ENCODE measurements at regions of chr14 and their contacts with region 1.

Region 1: DNA sequence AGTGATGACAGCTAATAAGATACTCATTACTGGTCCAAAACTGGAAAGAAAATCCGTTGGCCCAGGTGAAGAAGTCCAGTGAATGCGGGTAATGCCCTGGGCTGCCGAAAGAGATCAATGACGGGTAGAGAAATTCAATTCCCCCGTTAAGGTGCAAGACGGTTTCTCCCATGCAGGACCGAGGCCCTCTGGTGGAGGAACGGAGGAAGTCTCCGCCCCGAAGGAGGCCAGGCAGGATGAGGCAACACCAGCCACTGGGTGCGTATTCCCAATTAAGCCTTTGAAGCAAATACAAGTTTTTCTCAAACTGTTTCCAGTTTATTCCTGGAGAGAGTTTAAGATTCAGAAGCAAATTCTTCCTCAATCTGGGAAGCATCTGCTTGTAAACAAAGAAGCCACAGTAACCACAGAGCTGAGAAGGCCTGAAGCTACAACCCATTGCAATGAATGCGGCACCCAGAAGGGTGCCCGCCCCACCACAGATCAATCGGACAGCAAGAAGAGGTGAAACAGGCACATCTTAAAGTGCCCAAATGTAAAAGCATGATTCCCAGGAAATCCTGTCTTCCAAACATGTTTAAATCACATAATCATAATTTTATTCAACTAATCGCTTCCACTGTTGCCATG is 118.5 kb downstream of the TTC7B start:
- DNase-seq: peak; percentile 84 to 91
- ATAC-seq: peak; percentile 73 to 80 (median 75)
- H3K4me3 ChIP-seq: peak overlapping the region; percentile 29
- H3K27ac ChIP-seq: peak overlapping the region; percentile 94
- H3K4me1 ChIP-seq: peaks cover 73% of the 10 kb centered on the region
- H3K27me3 ChIP-seq: no peaks in the 10 kb centered on the region
- CTCF ChIP-seq: peak; percentile 97

Region 2: DNA sequence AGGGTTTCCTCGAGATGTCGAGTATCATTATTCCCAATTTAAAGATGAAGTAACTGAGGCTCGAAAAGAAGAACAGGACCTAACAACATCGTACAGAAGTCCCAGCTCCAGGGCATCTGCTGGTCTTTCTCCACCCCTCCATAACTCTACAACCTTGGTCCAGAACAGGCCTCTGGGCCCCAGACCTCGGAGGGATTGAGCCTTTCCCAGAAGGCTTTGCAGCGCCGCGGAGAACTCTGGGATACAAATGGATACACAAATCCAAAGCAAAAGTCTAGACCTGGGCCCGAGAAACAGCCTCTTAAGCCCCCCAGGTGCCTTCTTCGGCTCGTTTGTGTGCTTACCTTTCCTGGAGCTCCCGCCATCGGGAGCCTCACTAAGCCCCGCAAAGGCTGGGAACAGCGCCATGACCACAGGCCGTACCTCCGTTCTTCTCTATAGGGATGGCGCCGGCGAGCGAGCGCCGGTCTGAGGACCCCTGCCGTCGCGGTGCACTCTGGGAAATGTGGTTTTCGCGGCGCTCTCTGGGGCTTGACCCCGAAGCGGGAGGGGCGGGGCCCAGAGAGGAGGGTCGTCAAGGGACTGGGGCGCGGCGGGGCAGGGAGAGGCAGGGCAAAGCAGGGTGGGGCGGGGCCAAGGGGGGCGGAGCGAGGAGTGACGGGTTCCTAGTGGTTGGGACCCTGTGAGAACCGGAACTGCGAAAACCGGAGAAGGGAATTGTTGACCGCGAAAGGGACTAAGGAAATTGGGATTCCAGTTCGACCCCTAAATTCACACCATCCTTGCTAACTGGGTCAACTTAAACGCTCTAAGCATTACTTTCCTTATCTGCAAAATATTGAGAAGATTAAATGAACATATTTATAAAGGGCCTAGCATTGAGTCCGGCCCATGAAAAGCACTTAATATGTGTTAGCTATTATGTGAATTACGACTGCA is 365.9 kb before region 1 on chr14 and contains the start of gene NRDE2:
- intact Hi-C with region 1: loop called in 1 of 2 experiments (anchors 2 kb)
- DNase-seq: peak; percentile 100
- ATAC-seq: peak; percentile 98 to 100 (median 100)
- H3K4me3 ChIP-seq: peak within 1 kb of the TSS; percentile 76
- H3K27ac ChIP-seq: peak within 1 kb of the TSS; percentile 88
- H3K4me1 ChIP-seq: peaks cover 12% of the 10 kb centered on the region
- H3K27me3 ChIP-seq: peaks cover 0 to 15% (median 0%) of the 10 kb centered on the region in 3 donors
- CTCF ChIP-seq: no peak
- total RNA-seq, gene NRDE2: 11.0 to 21.8 (median 12.8) TPM

Region 3: DNA sequence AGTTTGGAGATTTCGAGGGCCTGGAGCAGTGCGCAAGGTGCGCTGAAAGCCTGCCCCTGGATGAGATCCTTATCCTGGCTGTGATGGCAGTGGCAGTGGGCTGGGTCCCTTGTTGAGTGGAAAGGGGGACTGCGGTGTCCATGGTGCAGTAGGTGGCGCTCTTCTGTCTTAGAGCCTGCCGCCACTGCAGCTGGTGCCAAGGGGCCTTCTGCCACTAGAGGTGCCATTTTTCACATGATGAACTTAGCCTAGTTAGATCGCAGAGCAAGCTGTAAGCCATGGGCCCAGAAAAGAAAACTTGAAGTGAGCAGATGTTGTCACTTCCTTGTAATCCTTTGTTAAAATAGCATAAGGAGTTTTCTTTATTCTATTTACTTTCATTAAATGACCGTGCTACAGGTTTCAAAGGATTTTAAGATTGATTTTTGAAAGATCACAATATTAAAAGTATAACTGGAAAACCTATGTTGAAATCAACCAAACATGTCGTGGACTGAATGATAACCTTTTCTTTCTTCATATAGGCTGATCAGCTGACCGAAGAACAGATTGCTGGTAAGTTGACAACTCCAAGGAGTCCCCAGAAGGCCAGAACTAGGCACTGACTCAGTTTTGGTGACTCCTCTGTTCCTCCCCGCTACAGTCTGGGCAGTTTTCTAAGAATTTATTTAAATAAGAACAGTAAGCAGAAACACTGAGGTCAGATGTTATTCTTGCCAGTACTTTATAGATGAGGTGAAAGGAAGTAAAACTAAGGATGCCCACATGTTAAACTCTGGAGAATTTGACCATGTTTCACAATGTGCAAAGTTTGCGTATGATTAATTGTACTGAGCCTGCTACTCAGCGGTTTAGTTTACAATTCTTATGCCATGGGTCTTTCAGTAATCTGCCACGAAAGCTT is 297.9 kb before region 1 on chr14:
- intact Hi-C with region 1: loop called (anchors 1 to 2 kb)
- DNase-seq: peak; percentile 88 to 94
- ATAC-seq: peak; percentile 73 to 80 (median 76)
- H3K4me3 ChIP-seq: peak overlapping the region; percentile 87
- H3K27ac ChIP-seq: peak overlapping the region; percentile 92
- H3K4me1 ChIP-seq: peaks cover 52% of the 10 kb centered on the region
- H3K27me3 ChIP-seq: no peaks in the 10 kb centered on the region
- CTCF ChIP-seq: peak; percentile 98

Region 4: DNA sequence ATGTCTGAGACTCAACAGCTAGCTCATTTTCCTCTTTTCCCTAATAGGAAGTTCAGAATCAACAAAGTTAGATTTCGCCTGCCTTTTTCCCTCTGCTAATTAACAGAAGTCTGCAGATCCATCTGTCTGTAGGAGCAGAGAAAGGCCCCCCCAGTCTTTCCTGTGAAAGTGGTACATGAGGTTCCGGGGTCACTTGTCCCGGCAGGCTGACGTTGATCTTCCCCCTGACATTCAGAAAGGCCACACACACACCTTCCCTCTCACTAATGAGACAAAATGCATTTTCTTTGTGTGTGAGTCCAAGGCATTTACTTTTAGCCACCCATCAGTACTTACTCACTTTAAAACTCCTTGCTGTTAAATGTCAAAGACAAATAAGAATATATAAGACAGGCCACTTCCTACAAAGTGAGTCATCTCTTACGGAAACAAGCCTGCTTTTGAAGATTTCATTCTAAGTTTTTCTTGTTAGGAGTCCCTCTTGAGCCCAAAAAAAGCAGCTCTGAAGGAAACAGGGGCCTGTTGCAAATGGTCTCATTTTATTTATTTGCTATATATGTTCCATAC is 20.1 kb before region 1 on chr14:
- intact Hi-C with region 1: loop called in 1 of 2 experiments (anchors 1 kb)
- DNase-seq: no peak
- ATAC-seq: no peak
- H3K4me3 ChIP-seq: no peak overlapping the region
- H3K27ac ChIP-seq: peak overlapping the region; percentile 93
- H3K4me1 ChIP-seq: peaks cover 66% of the 10 kb centered on the region
- H3K27me3 ChIP-seq: no peaks in the 10 kb centered on the region
- CTCF ChIP-seq: no peak

Region 5: GRCh38 chr14:90758028-90758889 is 60.6 kb after region 1 on chr14:
- intact Hi-C with region 1: loop called in 1 of 2 experiments (anchors 1 kb)
- DNase-seq: peak; percentile 93 to 97
- ATAC-seq: peak; percentile 79 to 86 (median 81)
- H3K4me3 ChIP-seq: peak overlapping the region; percentile 67
- H3K27ac ChIP-seq: peak overlapping the region; percentile 98
- H3K4me1 ChIP-seq: peaks cover 26% of the 10 kb centered on the region
- H3K27me3 ChIP-seq: no peaks in the 10 kb centered on the region
- CTCF ChIP-seq: peak; percentile 89

Region 6: GRCh38 chr14:90940318-90940962 is 242.7 kb after region 1 on chr14:
- intact Hi-C with region 1: no loop called
- DNase-seq: no peak
- ATAC-seq: no peak
- H3K4me3 ChIP-seq: no peak overlapping the region
- H3K27ac ChIP-seq: no peak overlapping the region
- H3K4me1 ChIP-seq: no peaks in the 10 kb centered on the region
- H3K27me3 ChIP-seq: no peaks in the 10 kb centered on the region
- CTCF ChIP-seq: no peak

Measured in psoas muscle (tissue), 8 donors.